CD4-positive, alpha-beta memory T cell (primary cell): ENCODE measurements at regions of chr15 and their contacts with region 1.

Region 1: GRCh38 chr15:63860155-63860554 is 26.4 kb upstream of the HERC1 start:
- DNase-seq: peak; percentile 77 to 83 (median 81)
- H3K4me3 ChIP-seq: peak overlapping the region in 1 of 2 donors; percentile 20
- H3K4me3 Mint-ChIP-seq: peak overlapping the region; percentile 0 to 83 (median 74)
- H3K27ac ChIP-seq: peak overlapping the region; percentile 39
- H3K27ac Mint-ChIP-seq: peak overlapping the region; percentile 92 to 99 (median 97)
- H3K4me1 ChIP-seq: peaks cover 37% of the 10 kb centered on the region
- H3K4me1 Mint-ChIP-seq: peaks cover 29 to 48% (median 40%) of the 10 kb centered on the region in 4 donors
- H3K27me3 ChIP-seq: no peaks in the 10 kb centered on the region
- H3K27me3 Mint-ChIP-seq: no peaks in the 10 kb centered on the region

Region 2: DNA sequence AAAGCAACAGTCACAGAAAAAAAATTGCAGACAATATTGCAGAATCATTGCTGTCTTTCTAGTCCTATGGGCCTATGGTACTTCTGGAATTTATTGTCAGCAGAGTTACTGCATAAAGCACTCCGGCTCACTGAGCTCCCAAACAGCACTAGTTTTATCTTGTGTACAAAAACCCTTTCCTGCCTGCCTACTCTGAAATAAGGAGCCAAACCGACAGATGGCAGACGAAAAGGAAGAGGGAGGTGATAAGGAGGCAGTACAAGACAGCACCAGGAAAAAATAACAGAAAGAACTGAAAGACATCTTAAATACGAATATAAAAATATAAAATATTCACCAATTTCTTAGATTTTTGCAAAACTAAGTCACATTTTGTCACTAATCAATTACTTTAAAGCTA is 42.0 kb before region 1 on chr15:
- CTCF ChIA-PET with region 1: no interaction called
- POLR2A ChIA-PET with region 1: no interaction called
- intact Hi-C with region 1: loop called (anchors 5 kb)
- DNase-seq: no peak
- H3K4me3 ChIP-seq: no peak overlapping the region
- H3K4me3 Mint-ChIP-seq: peak overlapping the region in 5 of 8 donors; percentile 36 to 60 (median 59)
- H3K27ac ChIP-seq: no peak overlapping the region
- H3K27ac Mint-ChIP-seq: no peak overlapping the region
- H3K4me1 ChIP-seq: peaks cover 90% of the 10 kb centered on the region
- H3K4me1 Mint-ChIP-seq: peaks cover 56 to 90% (median 72%) of the 10 kb centered on the region in 4 donors
- H3K27me3 ChIP-seq: no peaks in the 10 kb centered on the region
- H3K27me3 Mint-ChIP-seq: no peaks in the 10 kb centered on the region

Region 3: DNA sequence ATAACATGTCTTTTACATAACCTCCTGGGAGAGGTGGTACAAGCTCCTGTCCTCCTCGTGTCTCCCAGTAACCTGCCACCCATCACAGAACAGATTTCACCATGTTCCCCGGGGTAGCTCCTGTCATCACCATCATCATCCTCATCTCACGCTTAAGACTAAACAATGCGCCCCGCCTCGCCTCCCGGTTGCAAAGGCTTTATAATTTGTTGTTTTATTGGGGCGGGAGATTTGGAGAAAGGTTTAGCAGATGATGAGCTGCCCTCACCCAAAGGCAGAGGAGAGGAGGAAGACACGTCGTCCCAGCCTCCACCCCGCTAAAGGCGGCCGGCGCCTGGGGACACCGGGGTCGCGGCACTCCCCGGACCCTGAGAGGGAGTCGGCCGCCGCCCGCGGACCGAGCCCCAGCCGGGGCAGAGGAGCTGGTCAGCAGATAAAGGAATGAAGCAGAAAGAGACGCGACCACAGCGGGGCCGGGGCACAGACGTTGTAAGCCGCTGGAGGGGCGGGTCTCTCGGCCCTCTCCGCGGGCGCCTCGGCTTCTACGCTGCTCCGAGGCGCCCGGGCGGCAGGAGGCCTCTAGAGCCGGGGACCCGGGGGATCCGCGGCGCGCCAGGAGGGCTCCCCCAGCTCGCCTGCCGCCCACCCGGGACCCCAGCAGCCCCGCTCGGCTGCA is 27.0 kb before region 1 on chr15:
- CTCF ChIA-PET with region 1: interaction called, 10 read pairs
- POLR2A ChIA-PET with region 1: interaction called, 46 read pairs
- intact Hi-C with region 1: loop called (anchors 1 kb)
- DNase-seq: peak in 4 of 5 donors; percentile 40 to 53 (median 46)
- H3K4me3 ChIP-seq: peak overlapping the region; percentile 53 to 69
- H3K4me3 Mint-ChIP-seq: peak overlapping the region; percentile 94 to 98 (median 96)
- H3K27ac ChIP-seq: peak overlapping the region; percentile 94
- H3K27ac Mint-ChIP-seq: peak overlapping the region; percentile 95 to 100 (median 97)
- H3K4me1 ChIP-seq: peaks cover 56% of the 10 kb centered on the region
- H3K4me1 Mint-ChIP-seq: peaks cover 39 to 62% (median 48%) of the 10 kb centered on the region in 4 donors
- H3K27me3 ChIP-seq: no peaks in the 10 kb centered on the region
- H3K27me3 Mint-ChIP-seq: no peaks in the 10 kb centered on the region

Region 4: GRCh38 chr15:63839722-63840121 is 20.4 kb before region 1 on chr15:
- CTCF ChIA-PET with region 1: interaction called, 6 read pairs
- POLR2A ChIA-PET with region 1: interaction called, 26 read pairs
- intact Hi-C with region 1: no loop called
- DNase-seq: no peak
- H3K4me3 ChIP-seq: no peak overlapping the region
- H3K4me3 Mint-ChIP-seq: no peak overlapping the region
- H3K27ac ChIP-seq: no peak overlapping the region
- H3K27ac Mint-ChIP-seq: peak overlapping the region in 5 of 7 donors; percentile 16 to 77 (median 45)
- H3K4me1 ChIP-seq: peaks cover 26% of the 10 kb centered on the region
- H3K4me1 Mint-ChIP-seq: peaks cover 14 to 30% (median 21%) of the 10 kb centered on the region in 4 donors
- H3K27me3 ChIP-seq: no peaks in the 10 kb centered on the region
- H3K27me3 Mint-ChIP-seq: no peaks in the 10 kb centered on the region

Region 5: GRCh38 chr15:63923993-63924950 is 64.1 kb after region 1 on chr15:
- CTCF ChIA-PET with region 1: no interaction called
- POLR2A ChIA-PET with region 1: no interaction called
- intact Hi-C with region 1: no loop called
- DNase-seq: no peak
- H3K4me3 ChIP-seq: no peak overlapping the region
- H3K4me3 Mint-ChIP-seq: no peak overlapping the region
- H3K27ac ChIP-seq: no peak overlapping the region
- H3K27ac Mint-ChIP-seq: peak overlapping the region in 1 of 7 donors; percentile 2
- H3K4me1 ChIP-seq: peaks cover 14% of the 10 kb centered on the region
- H3K4me1 Mint-ChIP-seq: peaks cover 8 to 17% (median 12%) of the 10 kb centered on the region in 4 donors
- H3K27me3 ChIP-seq: no peaks in the 10 kb centered on the region
- H3K27me3 Mint-ChIP-seq: no peaks in the 10 kb centered on the region